ENCODE measurements at regions of chr11 and their contacts with region 1.

Region 1: DNA sequence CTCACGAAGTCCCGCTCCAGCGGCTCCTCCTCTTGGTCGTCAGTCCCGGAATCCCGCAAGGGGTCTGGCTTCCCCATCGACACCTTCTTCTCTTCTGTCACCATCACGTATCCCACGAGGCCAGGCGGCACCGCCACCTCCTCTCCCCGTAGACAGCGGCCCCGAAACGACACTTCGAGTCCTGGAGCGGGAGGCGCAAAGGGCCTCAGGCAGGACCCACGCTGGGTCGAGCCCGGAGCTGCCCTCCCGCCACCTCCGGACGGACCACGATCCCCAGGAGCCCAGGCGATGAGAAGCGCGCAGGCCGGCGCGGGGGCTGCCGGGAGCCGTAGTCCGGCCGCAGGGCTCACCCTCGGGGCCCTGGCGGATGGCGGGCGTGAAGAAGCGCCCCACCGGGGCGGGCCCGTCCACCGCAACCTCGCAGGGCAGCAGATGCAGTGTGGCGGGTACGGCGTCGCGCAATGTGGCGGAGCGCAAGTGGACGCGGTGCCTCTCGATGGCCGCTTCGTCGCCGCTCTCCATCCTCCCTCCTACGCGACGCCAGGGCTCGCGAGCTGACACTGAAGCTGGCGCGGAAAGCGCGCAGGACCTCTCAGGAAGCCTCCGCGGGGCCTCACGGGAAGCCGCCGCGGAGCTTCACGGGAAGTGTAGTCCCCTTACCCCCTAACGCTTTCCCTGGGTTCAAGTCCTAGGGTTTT is at the start of gene RNASEH2C:
- DNase-seq: peak; percentile 93
- H3K4me3 ChIP-seq: peak within 1 kb of the TSS; percentile 76 to 85
- H3K27ac ChIP-seq: peak within 1 kb of the TSS; percentile 48 to 94; a peak in 3 of 4 replicates
- H3K4me1 ChIP-seq: peaks cover 7 to 19% of the 10 kb centered on the region in 2 experiments; a peak in 1 of 4 replicates
- H3K27me3 ChIP-seq: no peaks in the 10 kb centered on the region
- CTCF ChIP-seq: no peak
- EP300 ChIP-seq: no peak
- RAD21 ChIP-seq: no peak
- polyA plus RNA-seq, gene RNASEH2C: 43.9 and 50.9 TPM in 2 replicates

Region 2: DNA sequence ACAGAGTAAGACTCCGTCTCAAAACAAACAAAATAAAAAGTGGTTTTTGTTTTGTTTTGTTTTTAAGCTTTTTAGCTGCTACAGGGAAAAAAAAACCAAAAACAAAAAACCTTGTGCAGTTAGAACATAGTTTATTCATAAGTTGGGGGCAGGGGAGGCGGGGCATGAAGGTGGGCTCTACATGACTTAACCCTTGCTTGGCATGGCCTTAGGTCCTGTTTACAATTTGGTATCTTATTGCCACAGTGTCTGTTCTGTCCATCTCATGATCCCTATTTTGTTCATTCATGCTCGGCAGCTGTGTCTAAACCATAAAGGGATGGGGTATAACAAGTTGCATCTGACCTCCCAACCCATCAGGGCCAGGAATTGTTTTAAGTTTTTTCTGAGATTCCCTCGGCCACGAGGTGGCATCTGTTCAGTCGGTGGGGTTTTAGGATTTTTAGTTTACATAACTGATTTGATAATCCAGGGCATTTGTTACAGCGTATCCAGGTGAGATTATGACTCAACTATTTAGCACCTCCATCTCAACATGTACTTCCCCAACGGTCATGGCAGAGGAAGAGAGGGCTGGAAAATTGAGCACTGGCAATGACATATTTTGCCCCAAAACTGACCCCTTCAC is 53.5 kb after region 1 on chr11:
- CTCF ChIA-PET with region 1: interaction called, 16 read pairs
- POLR2A ChIA-PET with region 1: no interaction called
- DNase-seq: no peak
- H3K4me3 ChIP-seq: no peak overlapping the region
- H3K27ac ChIP-seq: no peak overlapping the region
- H3K4me1 ChIP-seq: no peaks in the 10 kb centered on the region
- H3K27me3 ChIP-seq: no peaks in the 10 kb centered on the region
- CTCF ChIP-seq: no peak
- EP300 ChIP-seq: no peak
- RAD21 ChIP-seq: no peak

Measured in SK-N-SH (cell line).